Adrenal gland (tissue), 19 donors: ENCODE measurements at regions of chr18 and their contacts with region 1.

Region 1: GRCh38 chr18:9971313-9971920 is 57.6 kb downstream of the VAPA start:
- DNase-seq: peak; percentile 61 to 92 (median 79)
- H3K4me3 ChIP-seq: no peak overlapping the region
- H3K27ac ChIP-seq: no peak overlapping the region
- H3K4me1 ChIP-seq: no peaks in the 10 kb centered on the region
- H3K27me3 ChIP-seq: no peaks in the 10 kb centered on the region
- CTCF ChIP-seq: peak; percentile 56 to 88 (median 86)
- POLR2A ChIP-seq: no peak

Region 2: DNA sequence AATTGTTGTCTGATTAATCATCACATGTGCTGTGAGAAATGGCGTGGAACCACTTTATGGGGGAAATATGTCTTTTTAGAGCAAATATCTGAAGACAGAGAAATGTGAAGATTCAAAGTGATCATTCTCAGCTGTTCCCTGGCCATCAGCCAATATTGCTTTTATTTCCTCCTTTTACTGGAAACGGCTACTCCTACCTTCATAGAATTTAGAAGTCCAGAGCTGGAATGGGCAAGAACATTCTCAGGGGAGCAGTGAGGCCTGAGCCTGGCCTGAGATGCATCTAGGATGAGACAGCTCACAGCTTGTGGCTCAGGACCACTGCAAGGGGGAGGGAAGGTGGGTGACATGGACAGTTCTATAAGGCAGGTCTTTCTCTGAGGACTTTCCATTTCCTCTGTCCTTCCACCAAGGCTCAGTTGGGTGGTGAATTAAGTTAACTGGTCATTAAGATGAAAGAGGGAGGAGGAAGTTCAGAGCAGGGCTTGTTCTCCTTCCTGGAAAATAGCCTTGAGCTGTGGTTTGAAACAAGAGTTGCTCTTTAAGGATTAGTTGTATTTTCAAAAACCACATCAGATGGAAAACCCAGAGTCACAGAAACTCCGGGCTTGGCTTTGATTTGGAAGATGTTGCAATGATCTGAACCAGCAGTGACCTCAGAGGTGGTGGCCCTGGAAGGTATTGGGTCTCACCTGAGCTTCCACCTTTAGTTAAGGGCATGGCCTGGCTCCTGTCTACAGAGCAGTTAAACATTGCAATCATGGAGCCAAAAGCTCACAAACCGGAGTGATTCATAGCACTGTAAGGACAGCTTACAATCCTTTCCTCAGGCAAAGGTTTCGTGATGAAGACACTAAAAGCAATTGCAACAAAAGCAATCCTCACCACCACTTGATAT is 86.7 kb after region 1 on chr18:
- intact Hi-C with region 1: no loop called
- DNase-seq: peak in 1 of 7 donors; percentile 49
- H3K4me3 ChIP-seq: no peak overlapping the region
- H3K27ac ChIP-seq: peak overlapping the region in 4 of 5 donors; percentile 6 to 81 (median 50)
- H3K4me1 ChIP-seq: peaks cover 5 to 23% of the 10 kb centered on the region in 2 donors
- H3K27me3 ChIP-seq: no peaks in the 10 kb centered on the region
- CTCF ChIP-seq: no peak
- POLR2A ChIP-seq: no peak

Region 3: DNA sequence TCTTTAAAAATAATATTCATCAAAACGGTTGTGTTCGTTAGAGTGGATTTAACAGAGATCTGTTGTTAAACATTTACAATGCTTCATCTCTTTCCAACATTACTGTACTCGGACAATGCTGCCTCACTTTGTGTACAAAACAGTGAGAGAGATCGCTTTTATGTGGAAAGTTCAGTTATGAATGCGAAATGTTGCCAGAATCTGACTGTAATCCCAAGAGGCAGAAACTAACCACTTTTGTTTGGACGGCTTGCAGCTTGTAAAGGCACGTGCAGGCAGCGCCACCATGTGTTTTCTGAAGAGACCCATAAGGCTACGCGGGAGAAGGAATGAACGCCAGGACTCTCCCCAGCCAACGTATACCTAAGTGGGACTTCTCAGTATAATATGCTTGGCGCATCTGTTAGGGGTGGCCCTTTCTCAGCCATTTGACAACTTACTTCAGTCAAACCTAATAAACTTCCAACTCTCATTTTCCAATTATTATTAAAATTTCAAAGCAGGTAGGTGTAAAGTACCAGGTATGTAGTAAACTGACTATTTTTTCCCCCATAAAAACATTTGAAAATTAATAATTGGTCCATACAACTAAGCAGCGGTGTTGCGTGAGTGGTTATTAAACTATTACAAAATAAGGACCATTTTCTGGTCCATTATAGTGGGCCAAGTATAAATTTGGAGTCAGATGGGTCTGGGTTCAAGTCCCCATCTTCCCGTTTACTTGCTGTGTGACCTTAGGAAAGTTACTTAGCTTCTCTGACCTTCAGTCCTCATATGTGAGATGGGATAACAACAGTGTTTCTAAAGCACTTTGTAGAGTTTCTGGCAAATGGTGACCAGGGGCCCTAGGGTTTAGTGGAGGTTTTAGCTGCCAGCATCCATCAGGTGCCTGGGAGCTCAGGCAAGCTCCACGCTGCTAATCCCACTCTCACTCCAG is 548.9 kb after region 1 on chr18:
- intact Hi-C with region 1: loop called (anchors 5 kb)
- DNase-seq: peak; percentile 81 to 95 (median 91)
- H3K4me3 ChIP-seq: peak overlapping the region in 1 of 4 donors; percentile 18
- H3K27ac ChIP-seq: peak overlapping the region in 2 of 5 donors; percentile 18 to 58
- H3K4me1 ChIP-seq: peaks cover 0 to 28% of the 10 kb centered on the region in 2 donors
- H3K27me3 ChIP-seq: no peaks in the 10 kb centered on the region
- CTCF ChIP-seq: peak; percentile 54 to 90 (median 80)
- POLR2A ChIP-seq: peak in 1 of 2 donors; percentile 23